ENCODE measurements at regions of chr2 and their contacts with region 1.

Region 1: DNA sequence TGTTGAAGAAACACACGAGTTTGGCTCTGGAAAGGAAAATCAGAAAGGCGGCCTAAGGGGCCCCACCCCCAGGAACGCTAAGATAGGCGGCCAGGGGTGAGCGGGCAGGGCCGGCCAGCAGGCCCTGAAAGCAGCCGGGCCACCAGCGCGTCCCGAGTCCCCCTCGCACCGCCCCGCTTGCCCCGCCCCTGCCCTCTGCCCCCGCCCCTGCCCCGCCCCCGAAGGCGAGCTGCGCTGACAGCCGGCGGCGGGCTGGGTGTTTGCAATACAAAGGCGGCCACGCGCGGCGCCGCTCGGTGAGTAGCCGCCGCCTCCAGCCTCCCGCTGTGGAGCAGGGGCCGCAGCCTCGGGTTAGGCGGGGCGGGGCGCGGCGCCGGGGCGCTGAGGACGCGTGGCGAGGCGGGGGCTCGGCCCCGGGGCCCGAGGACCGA is at the start of gene LPIN1:
- DNase-seq: peak; percentile 91 to 96
- ATAC-seq: peak; percentile 92
- H3K4me3 ChIP-seq: peak within 1 kb of the TSS; percentile 44 to 95
- H3K27ac ChIP-seq: peak within 1 kb of the TSS in 1 of 2 donors; percentile 65
- H3K4me1 ChIP-seq: peaks cover 0 to 5% of the 10 kb centered on the region in 2 donors
- H3K27me3 ChIP-seq: no peaks in the 10 kb centered on the region
- total RNA-seq, gene LPIN1: 32.8 to 54.0 TPM

Region 2: DNA sequence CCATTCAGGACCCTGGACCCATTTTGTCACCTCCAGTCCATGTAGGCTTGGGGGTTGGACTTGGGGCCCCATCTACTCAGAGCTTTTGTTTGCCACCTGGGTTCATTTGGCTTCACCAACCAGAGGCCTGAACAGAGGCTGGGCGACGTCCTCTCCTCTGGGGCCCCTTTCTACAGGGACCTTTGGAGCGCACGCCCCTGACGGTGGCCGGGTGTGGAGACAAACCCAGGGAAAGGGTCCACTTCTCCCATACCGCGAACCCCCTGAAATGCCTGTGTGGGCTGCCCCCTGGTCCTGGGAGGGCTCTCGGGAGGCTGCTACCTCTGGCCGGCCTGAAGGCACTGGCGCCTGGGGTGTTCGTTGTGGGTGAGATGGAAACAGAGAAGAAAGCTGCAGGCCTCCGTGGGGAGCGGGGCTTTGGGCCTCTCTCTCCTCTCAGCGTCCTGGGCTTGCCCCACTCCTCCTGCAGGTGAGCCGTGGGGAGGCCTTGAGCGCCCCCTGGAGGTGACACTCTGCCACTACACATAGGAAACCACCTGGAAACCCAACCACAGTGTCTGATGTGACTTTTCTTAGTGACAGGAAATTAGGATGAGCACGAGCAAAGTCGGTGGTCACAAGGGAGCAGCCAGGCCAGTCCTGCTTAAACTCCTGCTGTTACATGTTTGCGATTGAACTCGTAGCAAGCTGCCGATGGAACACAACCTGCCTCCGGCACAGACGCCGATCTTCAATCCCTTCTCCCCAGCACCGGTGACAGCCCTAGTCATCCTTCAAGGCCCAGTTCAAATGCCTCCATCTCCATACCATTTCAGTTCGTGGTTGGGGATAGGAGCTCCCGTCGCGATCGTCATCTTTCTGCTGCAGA is 64.4 kb before region 1 on chr2:
- intact Hi-C with region 1: no loop called
- DNase-seq: no peak
- ATAC-seq: no peak
- H3K4me3 ChIP-seq: no peak overlapping the region
- H3K27ac ChIP-seq: no peak overlapping the region
- H3K4me1 ChIP-seq: no peaks in the 10 kb centered on the region
- H3K27me3 ChIP-seq: no peaks in the 10 kb centered on the region

Region 3: DNA sequence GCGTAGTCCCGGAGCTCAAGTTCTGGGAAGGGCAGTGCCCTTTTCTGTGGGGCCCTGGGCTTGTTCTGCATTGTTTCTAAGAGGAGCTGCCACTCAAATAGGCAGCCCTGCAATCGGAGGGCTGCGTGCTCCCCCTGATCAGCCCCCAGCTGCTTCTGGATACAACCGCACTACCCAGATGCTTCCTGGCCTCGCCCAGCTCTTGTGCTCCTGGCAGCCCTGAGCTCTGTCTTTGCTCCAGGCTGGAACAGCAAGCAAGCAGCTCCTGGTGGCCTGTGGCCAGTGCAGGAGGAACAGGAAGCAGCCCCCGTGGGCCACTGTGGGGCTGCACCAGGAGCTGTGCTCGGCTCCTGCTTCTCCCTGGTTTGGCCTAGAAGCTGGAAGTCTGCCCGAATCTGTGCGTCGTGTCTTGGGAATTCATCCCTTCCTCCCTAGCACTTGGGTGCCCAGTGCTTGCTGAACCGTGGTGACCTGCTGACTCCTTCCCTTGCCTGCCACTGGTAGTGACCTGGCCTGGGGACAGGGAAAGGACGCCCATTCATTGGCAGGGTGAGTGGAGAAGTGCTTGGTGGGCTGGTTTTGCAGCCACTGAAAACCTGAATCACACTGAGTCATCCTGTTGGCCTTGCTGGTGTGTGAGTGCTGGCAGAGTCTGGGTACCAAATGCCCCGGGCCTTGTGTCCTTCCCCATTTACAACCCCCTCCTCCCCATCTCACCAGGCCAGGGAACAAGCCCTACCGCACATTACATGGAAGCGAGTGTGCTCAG is 49.1 kb before region 1 on chr2:
- intact Hi-C with region 1: loop called (anchors 2 to 5 kb)
- DNase-seq: peak; percentile 86 to 91
- ATAC-seq: peak; percentile 49
- H3K4me3 ChIP-seq: no peak overlapping the region
- H3K27ac ChIP-seq: peak overlapping the region; percentile 14 to 30
- H3K4me1 ChIP-seq: peaks cover 0 to 7% of the 10 kb centered on the region in 2 donors
- H3K27me3 ChIP-seq: no peaks in the 10 kb centered on the region

Region 4: GRCh38 chr2:11710234-11710975 is 36.0 kb before region 1 on chr2:
- intact Hi-C with region 1: loop called in 1 of 2 experiments (anchors 5 kb)
- DNase-seq: peak in 1 of 2 donors; percentile 72
- ATAC-seq: peak; percentile 72
- H3K4me3 ChIP-seq: no peak overlapping the region
- H3K27ac ChIP-seq: no peak overlapping the region
- H3K4me1 ChIP-seq: peaks cover 2 to 4% of the 10 kb centered on the region in 2 donors
- H3K27me3 ChIP-seq: no peaks in the 10 kb centered on the region

Region 5: DNA sequence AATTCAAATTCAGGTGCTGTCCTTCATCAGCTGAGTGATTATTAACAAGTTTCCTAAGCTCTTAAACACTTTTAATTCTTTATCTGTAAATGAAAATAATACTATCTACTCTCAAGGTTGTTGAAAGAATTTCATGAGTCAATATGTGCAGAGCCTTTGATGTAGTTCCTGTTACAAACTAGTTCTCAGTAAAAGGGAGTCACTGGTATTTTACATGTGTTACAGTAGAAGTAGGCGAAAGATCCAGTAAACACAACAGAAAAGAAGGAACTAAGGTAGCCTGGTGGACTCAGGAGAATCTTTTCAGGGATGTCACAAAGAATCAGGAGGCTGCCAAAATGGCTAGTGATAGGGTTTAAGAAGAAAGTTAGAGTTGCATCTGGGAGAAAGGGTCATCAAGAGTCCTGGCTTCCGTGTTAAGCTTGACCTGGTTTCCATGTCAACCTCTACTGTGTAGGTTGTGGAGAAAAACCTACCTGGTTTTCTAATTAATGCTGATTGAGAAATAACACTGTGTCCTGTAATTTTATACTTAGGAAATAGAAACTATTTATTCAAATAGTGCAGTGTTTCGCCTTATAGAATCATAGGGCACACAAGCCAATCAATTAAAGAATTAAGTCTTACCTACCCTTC is 912.0 kb after region 1 on chr2:
- intact Hi-C with region 1: no loop called
- DNase-seq: no peak
- ATAC-seq: no peak
- H3K4me3 ChIP-seq: no peak overlapping the region
- H3K27ac ChIP-seq: no peak overlapping the region
- H3K4me1 ChIP-seq: peaks cover 1 to 2% of the 10 kb centered on the region in 2 donors
- H3K27me3 ChIP-seq: no peaks in the 10 kb centered on the region